ENCODE measurements at regions of chr7 and their contacts with region 1.

Region 1: GRCh38 chr7:47453093-47454049 is 128.5 kb downstream of the TNS3 start:
- DNase-seq: peak; percentile 61 to 73
- ATAC-seq: peak; percentile 68

Region 2: GRCh38 chr7:47571331-47572093 is 118.1 kb after region 1 on chr7:
- intact Hi-C with region 1: loop called in 1 of 2 experiments (anchors 10 kb)
- DNase-seq: peak; percentile 67 to 74
- ATAC-seq: peak; percentile 71